Mammary epithelial cell (primary cell): ENCODE measurements at regions of chr3 and their contacts with region 1.

Region 1: DNA sequence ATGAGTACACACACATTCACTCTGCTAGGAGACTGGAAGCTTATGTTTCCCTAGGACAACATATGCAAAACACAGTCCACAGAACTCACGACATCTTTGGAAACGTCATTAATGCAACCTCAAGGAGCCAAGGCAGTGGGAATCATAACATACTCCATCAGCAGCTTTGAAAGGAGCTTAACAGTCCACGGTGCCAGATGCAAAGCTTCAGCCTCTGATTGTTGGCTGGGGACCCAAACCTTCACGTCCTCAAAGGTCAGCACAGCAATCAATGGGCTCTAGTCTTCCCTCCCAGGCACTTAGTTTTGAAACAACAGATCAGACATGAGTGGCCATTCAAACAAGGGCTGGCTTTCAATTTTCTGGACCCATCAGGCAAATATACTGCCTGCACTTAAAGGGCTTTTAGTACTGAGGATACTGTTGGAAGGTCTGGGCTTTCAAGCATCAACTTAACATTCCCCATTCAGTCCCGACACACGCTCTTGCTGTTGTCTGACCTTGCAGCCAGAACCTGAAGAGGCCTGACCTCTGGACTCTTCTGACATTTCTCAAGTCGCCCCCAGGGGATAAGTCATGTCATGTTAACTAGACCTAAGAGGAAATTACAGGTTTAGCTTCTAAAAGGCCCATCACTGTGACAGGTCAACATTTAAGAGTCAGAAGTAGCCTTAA is 223.0 kb downstream of the PDZRN3 start:
- DNase-seq: no peak
- H3K4me3 ChIP-seq: no peak overlapping the region
- H3K27ac ChIP-seq: no peak overlapping the region
- H3K4me1 ChIP-seq: no peaks in the 10 kb centered on the region
- H3K27me3 ChIP-seq: no peaks in the 10 kb centered on the region
- CTCF ChIP-seq: no peak

Region 2: DNA sequence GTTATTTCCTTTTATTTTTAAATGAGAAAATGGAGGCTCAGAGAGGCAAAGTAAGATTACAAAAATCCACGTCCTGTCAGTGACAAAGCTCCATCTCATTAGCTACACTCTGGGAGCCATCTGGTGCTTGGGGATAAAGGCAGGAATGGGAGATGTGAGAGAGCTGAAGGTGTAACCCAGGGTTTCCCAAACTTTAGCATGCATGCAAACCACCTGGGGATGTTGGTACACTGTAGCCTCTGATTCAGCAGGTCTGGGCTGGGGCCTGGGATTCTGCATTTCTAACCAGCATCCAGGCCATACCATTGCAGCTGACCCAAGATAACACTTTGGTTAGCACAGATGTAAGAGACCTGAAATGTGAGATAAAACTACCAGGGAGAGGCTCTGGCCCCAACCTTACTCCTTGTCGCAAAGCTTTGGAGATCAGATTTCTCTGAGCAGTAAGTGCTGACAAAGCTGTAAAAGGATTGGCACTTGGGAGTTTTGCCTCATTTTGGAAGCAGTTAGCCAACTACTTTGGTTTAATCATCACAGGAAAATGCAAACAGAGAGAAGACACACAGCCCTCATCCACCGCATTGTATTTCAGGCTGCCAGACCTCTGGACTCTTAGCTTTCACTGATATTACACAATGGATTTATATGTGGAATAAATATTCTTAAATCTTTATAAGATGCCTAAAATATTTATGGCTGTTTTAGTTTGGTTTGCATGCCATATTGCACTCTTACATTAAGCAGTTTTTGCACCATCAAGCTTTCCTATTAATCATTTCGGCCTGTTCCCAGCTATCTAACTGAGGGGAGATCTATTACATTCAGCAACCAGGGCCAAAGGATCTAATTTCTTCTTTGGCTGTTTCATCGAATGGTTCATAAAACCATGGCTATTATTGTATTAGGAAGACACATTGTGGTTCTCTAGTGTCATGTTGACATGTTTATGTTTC is 77.3 kb before region 1 on chr3:
- CTCF ChIA-PET with region 1: no interaction called
- dilution Hi-C with region 1: loop called (anchors 5 kb)
- in situ Hi-C with region 1: no loop called
- intact Hi-C with region 1: no loop called
- DNase-seq: no peak
- H3K4me3 ChIP-seq: no peak overlapping the region
- H3K27ac ChIP-seq: no peak overlapping the region
- H3K4me1 ChIP-seq: no peaks in the 10 kb centered on the region
- H3K27me3 ChIP-seq: no peaks in the 10 kb centered on the region
- CTCF ChIP-seq: no peak

Region 3: GRCh38 chr3:73465926-73466325 is 64.2 kb after region 1 on chr3:
- CTCF ChIA-PET with region 1: no interaction called
- dilution Hi-C with region 1: loop called (anchors 5 kb)
- in situ Hi-C with region 1: no loop called
- intact Hi-C with region 1: no loop called
- DNase-seq: no peak
- H3K4me3 ChIP-seq: no peak overlapping the region
- H3K27ac ChIP-seq: no peak overlapping the region
- H3K4me1 ChIP-seq: no peaks in the 10 kb centered on the region
- H3K27me3 ChIP-seq: no peaks in the 10 kb centered on the region
- CTCF ChIP-seq: no peak